ENCODE measurements at regions of chr12 and their contacts with region 1.

Region 1: GRCh38 chr12:30847259-30847658 is 79.3 kb upstream of the TSPAN11 start:
- DNase-seq: no peak

Region 2: GRCh38 chr12:30822385-30823155 is 24.7 kb before region 1 on chr12:
- intact Hi-C with region 1: no loop called
- DNase-seq: peak; percentile 89

Region 3: GRCh38 chr12:31238764-31239387 is 391.6 kb after region 1 on chr12:
- intact Hi-C with region 1: loop called (anchors 5 kb)
- DNase-seq: peak; percentile 73

Region 4: GRCh38 chr12:31274520-31275300 is 427.5 kb after region 1 on chr12:
- intact Hi-C with region 1: loop called (anchors 5 kb)
- DNase-seq: no peak

Measured in cardiac septum (tissue), 1 donor.